Mucosa of descending colon (tissue), 3 donors: ENCODE measurements at regions of chr3 and their contacts with region 1.

Region 1: DNA sequence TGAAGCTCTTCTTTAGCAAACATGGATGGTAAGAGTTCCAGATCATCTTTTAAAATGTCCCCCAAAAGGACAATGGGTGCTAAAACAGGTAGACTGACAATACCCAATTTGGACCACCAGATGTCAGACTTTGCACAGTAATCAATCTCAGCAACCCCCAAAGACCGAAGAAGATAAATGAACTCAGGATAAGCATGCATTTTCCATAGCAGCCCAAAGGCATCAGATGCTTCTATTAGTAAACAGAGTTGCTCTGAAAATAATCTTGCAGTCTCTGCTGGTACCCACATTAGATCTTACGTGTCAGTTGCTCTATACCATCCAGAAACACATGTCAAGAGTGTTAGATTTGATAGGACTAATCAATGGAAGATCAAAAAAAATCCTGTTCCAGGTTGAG is 20.6 kb downstream of the MYH15 start:
- DNase-seq: peak in 1 of 3 donors; percentile 64
- ATAC-seq: peak; percentile 62
- H3K4me3 ChIP-seq: no peak overlapping the region
- H3K4me1 ChIP-seq: no peaks in the 10 kb centered on the region
- CTCF ChIP-seq: peak; percentile 40

Region 2: GRCh38 chr3:108552267-108553159 is 62.7 kb after region 1 on chr3:
- intact Hi-C with region 1: loop called (anchors 5 to 10 kb)
- DNase-seq: peak in 1 of 3 donors; percentile 57
- ATAC-seq: peak; percentile 59
- H3K4me3 ChIP-seq: no peak overlapping the region
- H3K4me1 ChIP-seq: no peaks in the 10 kb centered on the region
- CTCF ChIP-seq: peak; percentile 13